Activated CD8-positive, alpha-beta memory T cell treated with anti-CD3 and anti-CD28 coated beads, Interleukin-2, amount 10 ng/mL, durations not matched to agents 7 days and 5 days (primary cell): ENCODE measurements at regions of chr15 and their contacts with region 1.

Region 1: GRCh38 chr15:40274350-40275274 is 8.3 kb downstream of the ANKRD63 start:
- DNase-seq: peak; percentile 90
- ATAC-seq: peak; percentile 75
- H3K4me3 Mint-ChIP-seq: no peak overlapping the region
- H3K27ac Mint-ChIP-seq: no peak overlapping the region
- H3K4me1 Mint-ChIP-seq: peaks cover 8% of the 10 kb centered on the region
- H3K27me3 Mint-ChIP-seq: peaks cover 30% of the 10 kb centered on the region

Region 2: DNA sequence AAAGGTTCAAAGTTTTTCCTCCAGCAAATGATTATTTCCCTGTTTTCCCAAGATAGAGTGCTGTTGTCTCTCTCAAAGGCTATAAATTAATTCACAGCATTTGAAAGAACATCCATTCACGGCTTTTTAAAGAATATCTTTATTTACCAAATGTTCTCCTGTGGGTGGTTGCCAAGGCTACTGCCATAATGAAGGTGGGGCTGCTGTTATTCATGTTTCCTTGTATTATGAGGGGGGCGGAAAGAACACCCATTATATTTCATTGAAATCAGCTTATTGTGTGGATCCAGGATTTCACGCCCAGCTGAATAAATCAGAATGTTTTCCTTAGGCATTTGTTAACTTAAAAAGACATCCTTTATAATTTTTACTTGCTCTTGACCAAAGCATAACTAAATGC is 245.8 kb before region 1 on chr15:
- CTCF ChIA-PET with region 1: no interaction called
- DNase-seq: no peak
- ATAC-seq: no peak
- H3K4me3 Mint-ChIP-seq: no peak overlapping the region
- H3K27ac Mint-ChIP-seq: no peak overlapping the region
- H3K4me1 Mint-ChIP-seq: no peaks in the 10 kb centered on the region
- H3K27me3 Mint-ChIP-seq: no peaks in the 10 kb centered on the region

Region 3: GRCh38 chr15:40038638-40039543 is 235.7 kb before region 1 on chr15 and contains the start of gene SRP14:
- CTCF ChIA-PET with region 1: interaction called, 107 read pairs
- DNase-seq: peak; percentile 96
- ATAC-seq: peak; percentile 96
- H3K4me3 Mint-ChIP-seq: peak within 1 kb of the TSS; percentile 85
- H3K27ac Mint-ChIP-seq: peak within 1 kb of the TSS; percentile 94
- H3K4me1 Mint-ChIP-seq: peaks cover 50% of the 10 kb centered on the region
- H3K27me3 Mint-ChIP-seq: no peaks in the 10 kb centered on the region
- total RNA-seq, gene SRP14: 150 to 160 TPM

Region 4: DNA sequence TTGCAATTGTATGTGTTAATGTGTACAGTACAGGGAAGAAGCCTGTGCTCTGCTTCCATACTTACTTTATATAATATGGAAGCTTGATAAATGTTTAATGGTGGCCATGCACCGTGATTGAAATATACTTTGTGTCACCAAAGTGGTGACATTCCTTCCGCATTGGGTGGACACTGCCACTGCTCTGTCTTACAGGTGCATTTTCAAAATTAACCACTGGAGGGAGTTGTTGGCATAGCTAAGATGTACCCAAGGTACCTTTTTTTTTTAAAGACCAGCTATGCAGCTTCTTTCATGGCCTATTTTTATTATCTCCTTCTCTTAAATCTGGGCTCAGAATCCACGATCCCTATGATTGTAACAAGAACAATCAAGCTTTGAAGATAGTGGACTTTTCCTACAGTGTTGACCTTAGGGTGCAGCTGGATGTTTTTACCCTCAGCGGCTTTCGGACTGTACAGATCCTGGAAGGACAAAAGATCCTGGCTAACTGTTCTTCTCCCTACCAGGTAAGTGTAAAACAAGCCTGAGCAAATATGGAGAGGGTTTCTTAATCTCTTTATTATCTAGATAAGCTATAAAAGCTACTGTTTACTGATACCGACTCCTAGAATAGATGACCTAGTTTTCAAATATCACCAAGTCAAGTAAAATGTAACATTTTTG is 57.3 kb before region 1 on chr15:
- CTCF ChIA-PET with region 1: interaction called, 163 read pairs
- DNase-seq: peak; percentile 54
- ATAC-seq: peak; percentile 91
- H3K4me3 Mint-ChIP-seq: no peak overlapping the region
- H3K27ac Mint-ChIP-seq: no peak overlapping the region
- H3K4me1 Mint-ChIP-seq: no peaks in the 10 kb centered on the region
- H3K27me3 Mint-ChIP-seq: no peaks in the 10 kb centered on the region

Region 5: GRCh38 chr15:40252438-40253166 is 22.0 kb before region 1 on chr15:
- CTCF ChIA-PET with region 1: interaction called, 158 read pairs
- DNase-seq: no peak
- ATAC-seq: peak; percentile 68
- H3K4me3 Mint-ChIP-seq: peak overlapping the region; percentile 66
- H3K27ac Mint-ChIP-seq: no peak overlapping the region
- H3K4me1 Mint-ChIP-seq: peaks cover 13% of the 10 kb centered on the region
- H3K27me3 Mint-ChIP-seq: peaks cover 40% of the 10 kb centered on the region

Region 6: DNA sequence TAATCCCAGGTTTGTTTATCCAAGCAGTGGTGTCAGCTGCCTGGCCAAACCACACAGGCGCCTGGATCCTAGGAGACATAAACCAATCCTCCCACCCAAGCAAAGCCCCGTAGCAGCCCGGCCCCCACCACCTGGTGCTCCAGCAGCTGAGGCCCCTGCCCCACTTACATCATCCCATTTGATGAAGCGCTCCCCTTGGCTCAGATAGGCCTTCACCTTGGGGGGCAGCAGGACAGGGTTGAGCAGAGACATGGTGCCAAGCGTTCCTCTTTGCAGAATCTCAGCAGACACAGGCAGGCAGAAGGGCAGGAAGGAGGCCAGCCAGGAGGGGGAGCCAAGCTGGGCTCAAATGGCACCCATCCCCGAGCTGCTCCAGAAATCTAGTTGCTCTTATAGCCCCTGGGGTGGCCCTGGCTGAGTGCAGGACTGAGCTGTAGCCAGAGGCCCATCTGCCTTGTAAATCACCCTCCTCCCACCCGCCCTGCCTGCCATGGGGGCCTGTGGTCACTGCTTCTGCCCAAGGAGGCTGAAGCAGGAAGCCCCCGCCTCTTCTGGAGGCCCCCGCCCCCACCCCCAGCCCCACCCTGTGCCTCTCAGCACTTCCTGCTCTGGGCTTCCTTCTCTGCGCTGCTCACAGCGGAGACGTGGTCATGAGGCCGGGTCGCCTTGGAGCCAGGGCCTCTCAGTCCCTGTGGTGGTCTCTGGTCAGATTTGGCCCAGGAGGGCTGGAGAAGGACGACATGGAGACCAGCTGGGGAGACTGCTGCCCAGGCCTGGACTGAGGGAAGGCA is 33.0 kb after region 1 on chr15 and contains the start of gene PLCB2:
- CTCF ChIA-PET with region 1: interaction called, 411 read pairs
- DNase-seq: peak; percentile 81
- ATAC-seq: peak; percentile 78
- H3K4me3 Mint-ChIP-seq: peak within 1 kb of the TSS; percentile 91
- H3K27ac Mint-ChIP-seq: peak within 1 kb of the TSS; percentile 96
- H3K4me1 Mint-ChIP-seq: peaks cover 30% of the 10 kb centered on the region
- H3K27me3 Mint-ChIP-seq: peaks cover 9% of the 10 kb centered on the region
- total RNA-seq, gene PLCB2: 104 to 120 TPM

Region 7: GRCh38 chr15:40338041-40338657 is 63.5 kb after region 1 on chr15:
- CTCF ChIA-PET with region 1: interaction called, 270 read pairs
- DNase-seq: peak; percentile 83
- ATAC-seq: peak; percentile 90
- H3K4me3 Mint-ChIP-seq: no peak overlapping the region
- H3K27ac Mint-ChIP-seq: no peak overlapping the region
- H3K4me1 Mint-ChIP-seq: peaks cover 7% of the 10 kb centered on the region
- H3K27me3 Mint-ChIP-seq: peaks cover 2% of the 10 kb centered on the region

Region 8: DNA sequence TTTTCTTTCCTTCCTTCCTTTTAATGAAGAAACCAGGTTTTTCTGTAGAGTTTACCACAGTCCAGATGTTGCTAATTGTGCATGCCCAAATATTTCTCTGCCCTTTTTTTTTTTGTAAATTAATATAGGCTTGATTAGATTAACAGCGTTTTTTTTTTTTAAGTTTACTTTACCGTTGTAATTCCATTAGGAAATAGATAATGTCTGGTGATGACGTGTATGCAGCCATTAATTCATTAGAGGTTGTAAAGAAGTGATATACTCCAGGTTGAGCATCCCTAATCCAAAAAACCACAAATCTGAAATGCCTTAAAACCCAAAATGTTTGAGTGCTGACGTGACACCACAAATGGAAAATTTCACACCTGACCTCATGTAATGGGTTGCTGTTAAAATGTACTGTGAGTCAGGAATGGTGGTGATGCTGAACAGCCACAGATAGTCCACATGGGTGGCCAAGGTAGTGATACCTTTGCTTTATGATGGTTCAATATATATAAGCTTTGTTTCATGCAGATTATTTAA is 362.7 kb after region 1 on chr15:
- CTCF ChIA-PET with region 1: no interaction called
- DNase-seq: no peak
- ATAC-seq: no peak
- H3K4me3 Mint-ChIP-seq: no peak overlapping the region
- H3K27ac Mint-ChIP-seq: no peak overlapping the region
- H3K4me1 Mint-ChIP-seq: no peaks in the 10 kb centered on the region
- H3K27me3 Mint-ChIP-seq: no peaks in the 10 kb centered on the region